Caco-2 (cell line): ENCODE measurements at regions of chr5 and their contacts with region 1.

Region 1: DNA sequence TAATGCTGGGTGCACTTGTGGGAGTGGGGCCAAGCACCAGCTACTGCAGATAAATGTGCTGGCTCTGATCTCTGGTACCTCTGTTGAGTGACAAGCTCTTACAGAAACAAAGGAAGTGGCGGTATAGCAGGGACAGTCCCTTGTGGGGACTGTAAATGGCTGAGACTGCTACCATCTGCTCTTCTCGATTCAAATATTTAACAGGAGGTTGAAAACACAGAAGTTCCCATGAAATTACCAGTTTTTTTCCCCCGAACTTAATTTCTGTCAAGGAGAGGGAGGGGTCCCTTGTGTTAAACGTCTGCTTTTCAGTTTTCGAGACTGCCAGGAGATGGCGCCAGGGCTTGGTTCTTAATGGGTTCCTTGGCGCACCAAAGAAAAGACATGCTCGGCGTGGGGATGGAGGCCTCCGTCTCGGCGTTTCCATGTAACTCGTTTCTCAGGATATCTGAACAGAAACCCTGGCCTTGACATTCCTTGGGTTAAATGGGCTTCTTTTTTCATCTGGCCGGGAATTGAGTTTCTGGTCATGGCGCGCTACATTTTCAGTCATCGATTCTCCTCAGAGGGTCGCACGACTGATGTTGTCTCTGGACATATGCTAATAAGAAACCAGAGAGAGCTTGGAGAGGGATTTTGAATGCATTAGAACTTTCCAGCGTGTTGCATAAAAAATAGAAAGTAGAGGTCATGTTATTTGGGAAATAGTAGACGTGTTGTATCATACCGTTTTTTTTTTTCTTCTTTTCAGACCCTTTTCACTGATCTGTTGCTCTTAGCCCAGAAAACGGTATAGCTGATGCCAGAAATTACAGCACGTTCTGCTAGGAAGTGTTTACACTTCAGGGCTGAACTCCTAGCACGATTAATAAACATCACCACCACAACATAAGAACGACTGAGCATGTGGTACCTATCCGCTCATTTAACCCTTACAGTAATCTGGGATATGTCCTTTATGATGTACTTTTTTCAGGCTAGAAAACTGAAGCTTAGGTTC is 64.0 kb downstream of the CARTPT start:
- DNase-seq: peak; percentile 61 to 68
- H3K4me3 ChIP-seq: no peak overlapping the region
- H3K4me3 Mint-ChIP-seq: no peak overlapping the region
- H3K27ac Mint-ChIP-seq: no peak overlapping the region
- H3K4me1 ChIP-seq: no peaks in the 10 kb centered on the region
- H3K4me1 Mint-ChIP-seq: no peaks in the 10 kb centered on the region
- H3K27me3 ChIP-seq: no peaks in the 10 kb centered on the region
- H3K27me3 Mint-ChIP-seq: peaks cover 7% of the 10 kb centered on the region
- CTCF ChIP-seq: peak; percentile 69 to 77

Region 2: GRCh38 chr5:71843111-71843510 is 60.0 kb after region 1 on chr5:
- CTCF ChIA-PET with region 1: no interaction called
- POLR2A ChIA-PET with region 1: no interaction called
- intact Hi-C with region 1: no loop called
- DNase-seq: no peak
- H3K4me3 ChIP-seq: no peak overlapping the region
- H3K4me3 Mint-ChIP-seq: no peak overlapping the region
- H3K27ac Mint-ChIP-seq: no peak overlapping the region
- H3K4me1 ChIP-seq: no peaks in the 10 kb centered on the region
- H3K4me1 Mint-ChIP-seq: no peaks in the 10 kb centered on the region
- H3K27me3 ChIP-seq: no peaks in the 10 kb centered on the region
- H3K27me3 Mint-ChIP-seq: peaks cover 2% of the 10 kb centered on the region
- CTCF ChIP-seq: no peak

Region 3: DNA sequence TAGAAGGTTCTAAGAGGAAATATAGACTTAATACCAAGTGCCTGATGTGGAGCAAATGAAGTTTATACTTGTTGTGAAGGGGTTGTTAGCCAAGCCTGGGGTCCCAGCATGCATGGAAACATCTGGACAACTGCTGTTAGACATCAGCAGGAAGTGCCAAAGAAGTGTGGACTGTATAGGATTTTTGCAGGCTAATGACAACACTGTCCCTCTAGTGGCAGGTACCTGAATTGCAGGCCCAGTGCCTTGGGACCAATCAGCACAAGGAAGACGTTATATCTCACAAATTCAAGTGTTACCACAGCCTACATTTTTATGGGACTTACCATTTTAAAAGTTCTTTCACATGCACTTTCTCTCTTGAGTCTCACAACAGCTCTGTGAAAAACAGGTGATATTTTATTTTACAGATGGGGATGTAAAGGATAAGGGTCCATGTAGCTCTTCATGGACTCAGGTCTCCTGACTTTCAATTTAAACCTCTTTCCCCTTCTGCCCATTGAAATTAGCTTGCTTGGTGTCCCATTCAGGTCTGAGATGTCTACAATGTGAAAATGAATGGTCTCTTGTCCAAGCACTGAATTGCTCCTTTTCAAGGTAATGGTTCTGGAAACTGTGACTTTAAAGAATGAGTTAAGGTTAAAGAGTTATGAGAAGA is 235.2 kb after region 1 on chr5:
- CTCF ChIA-PET with region 1: no interaction called
- POLR2A ChIA-PET with region 1: no interaction called
- intact Hi-C with region 1: loop called (anchors 2 kb)
- DNase-seq: peak; percentile 55 to 64
- H3K4me3 ChIP-seq: no peak overlapping the region
- H3K4me3 Mint-ChIP-seq: no peak overlapping the region
- H3K27ac Mint-ChIP-seq: no peak overlapping the region
- H3K4me1 ChIP-seq: no peaks in the 10 kb centered on the region
- H3K4me1 Mint-ChIP-seq: no peaks in the 10 kb centered on the region
- H3K27me3 ChIP-seq: no peaks in the 10 kb centered on the region
- H3K27me3 Mint-ChIP-seq: peaks cover 6% of the 10 kb centered on the region
- CTCF ChIP-seq: peak; percentile 86 to 91

Region 4: DNA sequence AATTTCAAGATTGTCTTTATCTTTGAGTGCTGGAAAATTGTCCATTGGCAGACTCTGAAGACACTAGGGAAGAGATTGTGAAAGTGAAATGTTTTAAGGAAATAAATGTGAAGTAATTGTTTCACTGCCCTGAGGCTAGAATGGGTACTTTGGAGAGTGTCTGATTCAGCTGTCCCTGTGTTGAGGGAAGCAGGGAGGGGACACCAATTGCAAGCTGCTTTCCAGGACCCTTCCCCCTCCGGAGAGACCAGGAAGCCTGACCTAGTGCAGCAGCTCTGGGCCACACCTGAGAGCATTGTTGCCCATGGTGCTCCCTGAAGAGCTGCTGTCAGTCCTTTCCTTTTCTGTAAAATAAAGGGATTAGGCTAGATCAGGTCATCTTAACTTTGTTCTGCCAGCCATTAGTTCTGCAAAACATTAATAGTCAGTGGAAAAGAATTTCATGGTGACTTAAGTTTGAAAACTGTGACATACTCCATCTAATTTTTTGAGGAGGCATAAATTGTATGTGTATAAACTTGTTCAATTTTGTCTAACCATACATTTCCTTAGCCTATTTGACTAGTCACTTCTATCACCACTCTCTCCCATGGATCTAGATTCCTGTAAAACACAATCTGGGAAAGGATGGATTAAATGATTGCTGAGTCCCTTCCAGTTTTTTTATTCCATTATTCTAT is 343.0 kb after region 1 on chr5:
- CTCF ChIA-PET with region 1: no interaction called
- POLR2A ChIA-PET with region 1: no interaction called
- intact Hi-C with region 1: no loop called
- DNase-seq: no peak
- H3K4me3 ChIP-seq: no peak overlapping the region
- H3K4me3 Mint-ChIP-seq: no peak overlapping the region
- H3K27ac Mint-ChIP-seq: no peak overlapping the region
- H3K4me1 ChIP-seq: no peaks in the 10 kb centered on the region
- H3K4me1 Mint-ChIP-seq: no peaks in the 10 kb centered on the region
- H3K27me3 ChIP-seq: no peaks in the 10 kb centered on the region
- H3K27me3 Mint-ChIP-seq: peaks cover 17% of the 10 kb centered on the region
- CTCF ChIP-seq: no peak

Region 5: GRCh38 chr5:72268753-72269410 is 485.8 kb after region 1 on chr5:
- CTCF ChIA-PET with region 1: no interaction called
- POLR2A ChIA-PET with region 1: no interaction called
- intact Hi-C with region 1: loop called (anchors 10 kb)
- DNase-seq: peak; percentile 72 to 75
- H3K4me3 ChIP-seq: no peak overlapping the region
- H3K4me3 Mint-ChIP-seq: no peak overlapping the region
- H3K27ac Mint-ChIP-seq: peak overlapping the region; percentile 6
- H3K4me1 ChIP-seq: 0 out of 2 replicates have a peak, but pooled peaks cover 5% of the 10 kb centered on the region
- H3K4me1 Mint-ChIP-seq: peaks cover 7% of the 10 kb centered on the region
- H3K27me3 ChIP-seq: no peaks in the 10 kb centered on the region
- H3K27me3 Mint-ChIP-seq: no peaks in the 10 kb centered on the region
- CTCF ChIP-seq: peak; percentile 64 to 77